ENCODE measurements at regions of chr2 and their contacts with region 1.

Region 1: GRCh38 chr2:176398243-176399073 is 129.2 kb downstream of the MTX2 start:
- DNase-seq: no peak
- ATAC-seq: no peak
- H3K4me3 ChIP-seq: no peak overlapping the region
- H3K27ac ChIP-seq: no peak overlapping the region
- H3K4me1 ChIP-seq: no peaks in the 10 kb centered on the region
- H3K27me3 ChIP-seq: no peaks in the 10 kb centered on the region
- CTCF ChIP-seq: no peak
- EP300 ChIP-seq: no peak
- POLR2A ChIP-seq: no peak
- RAD21 ChIP-seq: no peak

Region 2: GRCh38 chr2:176409671-176410070 is 11.2 kb after region 1 on chr2:
- CTCF ChIA-PET with region 1: no interaction called
- POLR2A ChIA-PET with region 1: no interaction called
- in situ Hi-C with region 1: no loop called
- intact Hi-C with region 1: loop called (anchors 2 kb)
- DNase-seq: no peak
- ATAC-seq: no peak
- H3K4me3 ChIP-seq: no peak overlapping the region
- H3K27ac ChIP-seq: no peak overlapping the region
- H3K4me1 ChIP-seq: no peaks in the 10 kb centered on the region
- H3K27me3 ChIP-seq: no peaks in the 10 kb centered on the region; a peak in 1 of 5 replicates
- CTCF ChIP-seq: no peak
- EP300 ChIP-seq: no peak
- POLR2A ChIP-seq: no peak
- RAD21 ChIP-seq: no peak

Measured in HepG2 (cell line).